ENCODE measurements at regions of chr4 and their contacts with region 1.

Region 1: GRCh38 chr4:89447548-89447947 is 139.9 kb upstream of the GPRIN3 start:
- DNase-seq: no peak
- ATAC-seq: no peak
- H3K4me3 ChIP-seq: no peak overlapping the region
- H3K27ac ChIP-seq: no peak overlapping the region
- H3K4me1 ChIP-seq: no peaks in the 10 kb centered on the region
- H3K27me3 ChIP-seq: no peaks in the 10 kb centered on the region
- CTCF ChIP-seq: no peak
- EP300 ChIP-seq: no peak
- POLR2A ChIP-seq: no peak
- RAD21 ChIP-seq: no peak

Region 2: GRCh38 chr4:89724716-89725115 is 277.2 kb after region 1 on chr4:
- CTCF ChIA-PET with region 1: no interaction called
- POLR2A ChIA-PET with region 1: no interaction called
- RAD21 ChIA-PET with region 1: no interaction called
- SMC1A ChIA-PET with region 1: no interaction called
- in situ Hi-C with region 1: no loop called
- intact Hi-C with region 1: loop called (anchors 10 kb)
- DNase-seq: no peak
- ATAC-seq: no peak
- H3K4me3 ChIP-seq: no peak overlapping the region
- H3K27ac ChIP-seq: no peak overlapping the region
- H3K4me1 ChIP-seq: no peaks in the 10 kb centered on the region
- H3K27me3 ChIP-seq: no peaks in the 10 kb centered on the region
- CTCF ChIP-seq: no peak
- EP300 ChIP-seq: no peak
- POLR2A ChIP-seq: no peak
- RAD21 ChIP-seq: no peak

Measured in GM12878 (cell line).